ENCODE measurements at regions of chr7 and their contacts with region 1.

Region 1: DNA sequence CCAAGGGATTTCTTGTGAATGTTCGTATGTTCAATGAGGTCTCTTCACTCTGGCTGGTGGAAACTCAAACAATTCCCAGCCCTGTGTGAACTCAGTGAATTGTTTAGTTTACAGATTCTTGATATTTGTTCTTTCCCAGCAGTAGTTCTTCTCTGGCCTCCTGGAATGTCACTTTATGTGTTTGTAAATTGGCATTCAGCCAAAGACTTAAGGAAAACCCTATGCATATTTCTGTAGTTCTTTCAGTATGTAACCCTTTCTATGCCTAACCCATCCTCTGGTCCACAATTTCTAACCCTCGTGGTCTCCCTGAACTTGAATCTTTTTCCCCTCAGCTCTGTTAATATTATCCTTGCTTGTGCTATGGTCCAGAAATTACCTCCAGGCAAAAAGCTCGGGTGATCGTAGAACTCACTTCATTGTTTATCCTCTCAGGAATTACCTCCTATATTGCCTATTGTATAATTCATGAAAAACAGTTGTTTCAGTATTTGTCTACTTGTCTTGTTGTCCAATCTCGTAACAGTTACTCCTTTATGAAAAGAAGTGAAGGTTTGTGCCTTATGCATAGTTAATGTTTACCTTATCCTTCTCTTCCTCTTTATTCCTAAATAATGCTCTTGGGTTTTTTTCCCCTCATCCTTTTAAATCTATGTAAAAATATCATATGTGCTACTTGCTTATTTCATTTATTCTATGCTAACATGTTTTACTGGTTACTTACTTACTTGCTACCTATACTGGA is 23.7 kb upstream of the AGR3 start:
- DNase-seq: no peak
- ATAC-seq: peak; percentile 94
- H3K4me3 ChIP-seq: peak overlapping the region in 1 of 2 experiments; percentile 14; a peak in 2 of 4 replicates
- H3K27ac ChIP-seq: peak overlapping the region; percentile 80
- H3K4me1 ChIP-seq: peaks cover 24% of the 10 kb centered on the region
- H3K27me3 ChIP-seq: no peaks in the 10 kb centered on the region
- CTCF ChIP-seq: no peak

Region 2: GRCh38 chr7:16395131-16395530 is 510.3 kb before region 1 on chr7:
- CTCF ChIA-PET with region 1: no interaction called
- POLR2A ChIA-PET with region 1: no interaction called
- in situ Hi-C with region 1: no loop called
- intact Hi-C with region 1: no loop called
- DNase-seq: no peak
- ATAC-seq: no peak
- H3K4me3 ChIP-seq: no peak overlapping the region
- H3K27ac ChIP-seq: no peak overlapping the region
- H3K4me1 ChIP-seq: no peaks in the 10 kb centered on the region
- H3K27me3 ChIP-seq: no peaks in the 10 kb centered on the region
- CTCF ChIP-seq: no peak

Region 3: DNA sequence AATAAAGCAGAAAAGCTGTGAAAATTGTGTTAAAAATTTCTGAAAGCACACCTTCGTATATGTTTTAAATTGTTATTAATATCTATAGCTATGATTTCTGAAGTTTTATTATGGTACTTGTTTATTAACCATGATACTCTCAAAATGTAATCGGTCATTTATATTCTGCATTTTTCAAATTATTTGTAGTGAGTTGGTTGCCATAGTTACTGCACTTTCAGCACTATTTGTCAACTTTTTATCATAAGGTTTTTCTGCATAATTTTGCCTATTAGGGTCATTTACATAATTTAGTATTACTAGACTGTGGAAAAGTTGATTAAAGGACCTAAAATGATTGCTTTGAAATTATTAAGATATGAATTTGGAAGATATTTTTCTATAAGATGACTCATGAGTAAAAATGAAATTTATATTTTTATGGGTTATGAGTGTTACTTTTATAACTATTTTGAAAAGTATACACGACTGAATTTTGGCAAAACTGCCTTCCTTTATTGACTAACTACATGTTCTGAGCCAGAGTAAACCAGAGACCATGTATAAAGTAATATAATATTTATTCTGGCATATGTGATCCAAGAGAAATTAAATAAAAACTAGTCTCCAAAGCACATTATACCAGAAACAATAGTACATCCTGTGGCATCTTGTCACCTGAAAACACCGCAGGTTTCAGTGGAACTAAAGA is 92.8 kb before region 1 on chr7:
- CTCF ChIA-PET with region 1: no interaction called
- POLR2A ChIA-PET with region 1: interaction called, 12 read pairs
- in situ Hi-C with region 1: no loop called
- intact Hi-C with region 1: no loop called
- DNase-seq: no peak
- ATAC-seq: no peak
- H3K4me3 ChIP-seq: no peak overlapping the region
- H3K27ac ChIP-seq: peak overlapping the region; percentile 76; the same call in 1 of the 2 replicates
- H3K4me1 ChIP-seq: peaks cover 35% of the 10 kb centered on the region
- H3K27me3 ChIP-seq: no peaks in the 10 kb centered on the region
- CTCF ChIP-seq: no peak

Region 4: GRCh38 chr7:16926283-16926682 is 20.8 kb after region 1 on chr7:
- CTCF ChIA-PET with region 1: interaction called, 4 read pairs
- POLR2A ChIA-PET with region 1: interaction called, 11 read pairs
- in situ Hi-C with region 1: no loop called
- intact Hi-C with region 1: no loop called
- DNase-seq: no peak
- ATAC-seq: peak; percentile 87
- H3K4me3 ChIP-seq: no peak overlapping the region
- H3K27ac ChIP-seq: no peak overlapping the region
- H3K4me1 ChIP-seq: no peaks in the 10 kb centered on the region
- H3K27me3 ChIP-seq: no peaks in the 10 kb centered on the region
- CTCF ChIP-seq: peak; percentile 79

Measured in Panc1 (cell line).